ENCODE measurements at regions of chr12 and their contacts with region 1.

Region 1: GRCh38 chr12:34022079-34022830 is at the start of gene ALG10:
- DNase-seq: peak; percentile 89 to 98
- ATAC-seq: peak; percentile 95 to 99 (median 96)
- H3K4me3 ChIP-seq: peak within 1 kb of the TSS; percentile 76
- H3K4me3 Mint-ChIP-seq: peak within 1 kb of the TSS; percentile 92
- H3K27ac ChIP-seq: peak within 1 kb of the TSS; percentile 88
- H3K27ac Mint-ChIP-seq: peak within 1 kb of the TSS; percentile 93 to 96
- H3K4me1 ChIP-seq: peaks cover 6% of the 10 kb centered on the region
- H3K4me1 Mint-ChIP-seq: peaks cover 22 to 27% of the 10 kb centered on the region in 2 donors
- H3K27me3 ChIP-seq: no peaks in the 10 kb centered on the region
- H3K27me3 Mint-ChIP-seq: peaks cover 5 to 8% of the 10 kb centered on the region in 2 donors
- CTCF ChIP-seq: peak; percentile 71
- total RNA-seq, gene ALG10: 9.6 to 11.1 (median 9.8) TPM

Region 2: DNA sequence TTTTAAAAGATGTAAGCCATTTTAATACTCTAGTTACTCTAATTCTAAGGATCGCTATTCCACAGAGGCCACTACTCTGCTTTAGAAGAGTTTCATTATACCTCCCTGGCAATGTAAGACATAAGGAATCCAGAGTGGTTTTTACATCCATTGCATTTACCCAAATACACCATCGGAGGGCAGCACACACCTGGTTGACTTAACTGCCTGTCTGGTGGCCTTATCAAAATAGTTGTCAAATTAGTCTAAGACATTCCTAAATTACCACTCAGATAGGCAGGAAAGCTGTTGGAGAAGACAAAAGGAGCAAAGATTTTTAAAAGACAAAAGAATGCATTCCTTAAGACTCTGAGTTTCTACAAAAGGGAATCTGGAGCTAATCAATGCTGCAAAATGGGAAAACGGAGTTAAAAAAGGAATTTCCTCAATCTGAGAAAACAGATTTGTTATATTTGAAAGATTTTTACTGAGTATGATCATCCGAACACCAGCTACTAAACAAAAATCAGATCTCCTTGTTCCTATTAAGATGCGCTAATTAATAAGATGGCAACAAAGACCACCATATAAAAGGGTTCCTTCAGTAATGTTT is 1656.7 kb before region 1 on chr12:
- intact Hi-C with region 1: loop called (anchors 10 kb)
- DNase-seq: peak in 1 of 2 donors; percentile 69
- ATAC-seq: peak in 2 of 3 donors; percentile 74
- H3K4me3 ChIP-seq: no peak overlapping the region
- H3K4me3 Mint-ChIP-seq: no peak overlapping the region
- H3K27ac ChIP-seq: no peak overlapping the region
- H3K27ac Mint-ChIP-seq: no peak overlapping the region
- H3K4me1 ChIP-seq: no peaks in the 10 kb centered on the region
- H3K4me1 Mint-ChIP-seq: no peaks in the 10 kb centered on the region
- H3K27me3 ChIP-seq: no peaks in the 10 kb centered on the region
- H3K27me3 Mint-ChIP-seq: no peaks in the 10 kb centered on the region
- CTCF ChIP-seq: peak; percentile 68

Region 3: DNA sequence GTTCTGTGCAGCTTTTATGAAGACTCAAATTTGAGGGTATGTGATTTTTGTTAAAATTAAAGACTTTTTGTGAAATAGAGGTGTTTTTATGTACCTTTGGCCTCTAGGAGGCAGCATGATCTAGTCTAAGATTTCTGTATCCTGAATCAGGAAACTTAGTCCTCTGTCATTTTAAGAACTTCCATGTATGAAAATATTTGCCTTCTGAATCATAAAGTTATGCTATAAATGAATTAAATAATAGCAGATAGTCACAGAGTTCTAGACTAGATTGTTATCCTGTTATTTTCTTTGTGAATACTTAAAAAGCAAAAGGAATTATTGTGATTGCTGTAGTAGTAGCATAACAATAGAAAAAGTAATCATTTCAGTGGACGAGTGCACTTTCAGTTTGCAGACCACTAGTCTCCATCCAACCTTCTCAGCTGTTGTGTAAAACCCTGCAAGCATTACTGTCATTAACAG is 1566.6 kb before region 1 on chr12:
- intact Hi-C with region 1: loop called (anchors 5 kb)
- DNase-seq: peak in 1 of 2 donors; percentile 64
- ATAC-seq: peak in 2 of 3 donors; percentile 49 to 53
- H3K4me3 ChIP-seq: no peak overlapping the region
- H3K4me3 Mint-ChIP-seq: peak overlapping the region; percentile 17
- H3K27ac ChIP-seq: no peak overlapping the region
- H3K27ac Mint-ChIP-seq: no peak overlapping the region
- H3K4me1 ChIP-seq: no peaks in the 10 kb centered on the region
- H3K4me1 Mint-ChIP-seq: no peaks in the 10 kb centered on the region
- H3K27me3 ChIP-seq: no peaks in the 10 kb centered on the region
- H3K27me3 Mint-ChIP-seq: peaks cover 0 to 3% of the 10 kb centered on the region in 2 donors
- CTCF ChIP-seq: peak; percentile 71

Region 4: GRCh38 chr12:32679091-32679919 is 1343.0 kb before region 1 on chr12 and contains the start of gene DNM1L:
- intact Hi-C with region 1: loop called (anchors 1 kb)
- DNase-seq: peak; percentile 89 to 95
- ATAC-seq: peak; percentile 98 to 100 (median 98)
- H3K4me3 ChIP-seq: peak within 1 kb of the TSS; percentile 51
- H3K4me3 Mint-ChIP-seq: peak within 1 kb of the TSS; percentile 94
- H3K27ac ChIP-seq: peak within 1 kb of the TSS; percentile 70
- H3K27ac Mint-ChIP-seq: peak within 1 kb of the TSS; percentile 85 to 92
- H3K4me1 ChIP-seq: peaks cover 6% of the 10 kb centered on the region
- H3K4me1 Mint-ChIP-seq: peaks cover 16 to 21% of the 10 kb centered on the region in 2 donors
- H3K27me3 ChIP-seq: no peaks in the 10 kb centered on the region
- H3K27me3 Mint-ChIP-seq: no peaks in the 10 kb centered on the region
- CTCF ChIP-seq: no peak
- total RNA-seq, gene DNM1L: 69.2 to 84.9 (median 81.0) TPM

Region 5: DNA sequence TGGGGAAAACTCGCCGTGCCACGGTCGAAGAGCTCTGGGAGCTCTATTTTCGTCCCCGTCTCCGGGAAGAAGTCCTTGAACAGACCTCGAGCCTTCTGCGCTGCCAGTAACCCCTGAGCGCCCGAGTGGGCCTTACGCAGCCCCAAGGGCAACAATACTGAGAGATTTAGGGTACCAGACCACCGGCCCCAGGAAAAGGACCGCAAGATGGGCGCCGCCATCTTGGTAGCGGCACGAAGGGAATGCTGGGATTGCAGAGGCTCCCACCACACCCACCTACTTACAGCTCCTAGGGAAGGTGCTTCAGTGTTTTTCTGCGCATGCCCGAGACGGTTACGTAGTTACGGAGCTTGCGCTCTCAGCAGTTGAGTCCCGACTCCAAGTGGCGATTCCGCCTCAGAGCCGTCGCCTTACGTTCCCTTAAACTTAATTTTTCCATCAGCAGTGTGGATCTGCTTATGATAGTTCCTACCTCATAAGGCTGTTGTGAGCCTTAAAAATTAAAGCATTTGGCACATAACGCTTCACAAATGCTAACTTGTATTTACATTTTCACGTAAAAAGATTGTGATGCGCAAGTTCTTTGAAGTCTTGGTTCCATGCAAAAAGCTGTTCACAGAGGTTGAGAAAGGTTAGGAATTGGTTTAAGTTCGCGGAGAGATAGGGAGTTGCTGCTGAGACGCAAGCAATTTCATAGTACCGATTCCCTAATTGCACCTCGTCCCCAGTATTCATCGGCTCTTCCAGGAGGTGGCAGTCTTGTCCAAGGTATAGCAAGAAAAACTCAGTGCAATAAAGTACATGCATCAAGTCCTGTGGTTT is 1266.4 kb before region 1 on chr12 and contains the start of gene YARS2:
- intact Hi-C with region 1: loop called (anchors 1 kb)
- DNase-seq: peak; percentile 69 to 97
- ATAC-seq: peak; percentile 77 to 85 (median 80)
- H3K4me3 ChIP-seq: peak within 1 kb of the TSS; percentile 85
- H3K4me3 Mint-ChIP-seq: peak within 1 kb of the TSS; percentile 89
- H3K27ac ChIP-seq: peak within 1 kb of the TSS; percentile 82
- H3K27ac Mint-ChIP-seq: peak within 1 kb of the TSS; percentile 85 to 88
- H3K4me1 ChIP-seq: peaks cover 14% of the 10 kb centered on the region
- H3K4me1 Mint-ChIP-seq: peaks cover 16 to 17% of the 10 kb centered on the region in 2 donors
- H3K27me3 ChIP-seq: no peaks in the 10 kb centered on the region
- H3K27me3 Mint-ChIP-seq: peaks cover 0 to 6% of the 10 kb centered on the region in 2 donors
- CTCF ChIP-seq: peak; percentile 79
- total RNA-seq, gene YARS2: 9.2 to 15.9 (median 9.3) TPM

Region 6: GRCh38 chr12:33994857-33995808 is 27.1 kb before region 1 on chr12:
- intact Hi-C with region 1: no loop called
- DNase-seq: no peak
- ATAC-seq: no peak
- H3K4me3 ChIP-seq: no peak overlapping the region
- H3K4me3 Mint-ChIP-seq: no peak overlapping the region
- H3K27ac ChIP-seq: no peak overlapping the region
- H3K27ac Mint-ChIP-seq: no peak overlapping the region
- H3K4me1 ChIP-seq: no peaks in the 10 kb centered on the region
- H3K4me1 Mint-ChIP-seq: no peaks in the 10 kb centered on the region
- H3K27me3 ChIP-seq: no peaks in the 10 kb centered on the region
- H3K27me3 Mint-ChIP-seq: peaks cover 0 to 6% of the 10 kb centered on the region in 2 donors
- CTCF ChIP-seq: no peak

Region 7: GRCh38 chr12:34054938-34055337 is 32.7 kb after region 1 on chr12:
- intact Hi-C with region 1: no loop called
- DNase-seq: no peak
- ATAC-seq: no peak
- H3K4me3 ChIP-seq: no peak overlapping the region
- H3K4me3 Mint-ChIP-seq: no peak overlapping the region
- H3K27ac ChIP-seq: no peak overlapping the region
- H3K27ac Mint-ChIP-seq: no peak overlapping the region
- H3K4me1 ChIP-seq: no peaks in the 10 kb centered on the region
- H3K4me1 Mint-ChIP-seq: peaks cover 0 to 5% of the 10 kb centered on the region in 2 donors
- H3K27me3 ChIP-seq: no peaks in the 10 kb centered on the region
- H3K27me3 Mint-ChIP-seq: no peaks in the 10 kb centered on the region
- CTCF ChIP-seq: no peak